K562 (cell line): ENCODE measurements at regions of chr2 and their contacts with region 1.

Region 1: GRCh38 chr2:205947621-205948495 is 138.1 kb downstream of the INO80D start:
- DNase-seq: peak; percentile 42 to 55 (median 50)
- ATAC-seq: peak; percentile 89
- H3K4me3 ChIP-seq: no peak overlapping the region
- H3K27ac ChIP-seq: no peak overlapping the region
- H3K4me1 ChIP-seq: no peaks in the 10 kb centered on the region; a peak in 1 of 5 replicates
- H3K27me3 ChIP-seq: peaks cover 5 to 22% of the 10 kb centered on the region in 2 experiments; a peak in 3 of 5 replicates
- CTCF ChIP-seq: peak; percentile 71 to 80 (median 80)
- EP300 ChIP-seq: no peak
- POLR2A ChIP-seq: no peak
- RAD21 ChIP-seq: peak; percentile 67 to 77

Region 2: GRCh38 chr2:205403244-205403825 is 544.5 kb before region 1 on chr2:
- CTCF ChIA-PET with region 1: no interaction called
- POLR2A ChIA-PET with region 1: no interaction called
- in situ Hi-C with region 1: no loop called
- intact Hi-C with region 1: no loop called
- DNase-seq: no peak
- ATAC-seq: no peak
- H3K4me3 ChIP-seq: no peak overlapping the region
- H3K27ac ChIP-seq: no peak overlapping the region
- H3K4me1 ChIP-seq: no peaks in the 10 kb centered on the region
- H3K27me3 ChIP-seq: no peaks in the 10 kb centered on the region
- CTCF ChIP-seq: no peak
- EP300 ChIP-seq: no peak
- POLR2A ChIP-seq: no peak
- RAD21 ChIP-seq: no peak

Region 3: DNA sequence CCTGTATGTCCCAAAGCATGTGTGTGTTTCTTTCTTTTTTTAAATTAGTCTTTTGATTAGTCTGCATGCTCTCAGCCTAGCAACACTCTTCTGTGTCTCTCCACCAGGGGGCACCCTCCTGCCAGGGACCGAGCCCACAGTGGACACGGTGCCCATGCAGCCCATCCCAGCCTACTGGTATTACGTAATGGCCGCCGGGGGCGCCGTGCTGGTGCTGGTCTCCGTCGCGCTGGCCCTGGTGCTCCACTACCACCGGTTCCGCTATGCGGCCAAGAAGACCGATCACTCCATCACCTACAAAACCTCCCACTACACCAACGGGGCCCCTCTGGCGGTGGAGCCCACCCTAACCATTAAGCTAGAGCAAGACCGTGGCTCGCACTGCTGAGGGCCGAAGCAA is 171.7 kb before region 1 on chr2:
- CTCF ChIA-PET with region 1: no interaction called
- POLR2A ChIA-PET with region 1: no interaction called
- in situ Hi-C with region 1: no loop called
- intact Hi-C with region 1: loop called (anchors 1 kb)
- DNase-seq: peak; percentile 45 to 71 (median 61)
- ATAC-seq: peak; percentile 95
- H3K4me3 ChIP-seq: no peak overlapping the region
- H3K27ac ChIP-seq: no peak overlapping the region
- H3K4me1 ChIP-seq: peaks cover 0 to 3% of the 10 kb centered on the region in 2 experiments; a peak in 1 of 5 replicates
- H3K27me3 ChIP-seq: peaks cover 0 to 4% of the 10 kb centered on the region in 2 experiments; a peak in 1 of 5 replicates
- CTCF ChIP-seq: peak; percentile 62 to 73 (median 65)
- EP300 ChIP-seq: no peak
- POLR2A ChIP-seq: no peak
- RAD21 ChIP-seq: peak; percentile 54 to 64

Region 4: GRCh38 chr2:205903638-205904037 is 44.2 kb before region 1 on chr2:
- CTCF ChIA-PET with region 1: no interaction called
- POLR2A ChIA-PET with region 1: no interaction called
- in situ Hi-C with region 1: no loop called
- intact Hi-C with region 1: loop called (anchors 5 kb)
- DNase-seq: peak; percentile 25 to 67 (median 40)
- ATAC-seq: peak; percentile 95
- H3K4me3 ChIP-seq: no peak overlapping the region
- H3K27ac ChIP-seq: no peak overlapping the region
- H3K4me1 ChIP-seq: peaks cover 3 to 12% of the 10 kb centered on the region in 2 experiments; a peak in 3 of 5 replicates
- H3K27me3 ChIP-seq: no peaks in the 10 kb centered on the region
- CTCF ChIP-seq: peak; percentile 54 to 63 (median 55)
- EP300 ChIP-seq: no peak
- POLR2A ChIP-seq: no peak
- RAD21 ChIP-seq: peak in 1 of 2 experiments; percentile 51; a peak in 3 of 4 replicates